Transverse colon (tissue), 4 donors: ENCODE measurements at regions of chr6 and their contacts with region 1.

Region 1: DNA sequence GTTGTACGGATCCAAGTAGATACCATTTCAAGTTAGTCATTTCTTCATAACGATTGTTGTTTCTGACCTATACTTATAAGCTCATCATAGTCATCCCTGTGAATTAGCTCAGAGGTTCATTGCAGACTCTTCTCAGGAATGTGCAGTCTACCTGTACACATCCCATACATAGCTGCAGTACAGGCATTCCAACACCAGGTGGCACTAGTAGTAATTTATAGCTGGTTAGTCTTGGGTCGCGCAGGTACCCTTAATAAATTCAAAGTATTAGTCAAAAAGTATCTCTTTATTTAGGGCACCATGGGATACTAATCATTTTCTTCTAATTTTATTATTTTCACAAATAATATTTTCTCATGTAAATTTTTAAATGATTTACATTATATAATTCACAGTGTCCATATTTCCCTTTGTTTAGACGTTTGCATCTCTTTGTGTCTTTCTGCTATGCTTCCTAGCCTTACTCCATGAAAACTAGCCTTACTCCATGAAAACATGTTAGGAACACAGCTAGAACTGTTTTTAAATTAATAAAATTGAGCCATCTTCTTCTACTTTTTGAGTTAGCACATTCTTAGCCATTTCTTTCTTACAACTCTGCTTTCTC is 128.6 kb upstream of the FAM83B start:
- DNase-seq: peak; percentile 86
- H3K4me3 ChIP-seq: no peak overlapping the region
- H3K27ac ChIP-seq: peak overlapping the region; percentile 19 to 66 (median 56)
- H3K4me1 ChIP-seq: peaks cover 0 to 19% (median 9%) of the 10 kb centered on the region in 4 donors
- H3K27me3 ChIP-seq: no peaks in the 10 kb centered on the region
- CTCF ChIP-seq: peak; percentile 74 to 88 (median 80)
- EP300 ChIP-seq: no peak
- POLR2A ChIP-seq: no peak

Region 2: DNA sequence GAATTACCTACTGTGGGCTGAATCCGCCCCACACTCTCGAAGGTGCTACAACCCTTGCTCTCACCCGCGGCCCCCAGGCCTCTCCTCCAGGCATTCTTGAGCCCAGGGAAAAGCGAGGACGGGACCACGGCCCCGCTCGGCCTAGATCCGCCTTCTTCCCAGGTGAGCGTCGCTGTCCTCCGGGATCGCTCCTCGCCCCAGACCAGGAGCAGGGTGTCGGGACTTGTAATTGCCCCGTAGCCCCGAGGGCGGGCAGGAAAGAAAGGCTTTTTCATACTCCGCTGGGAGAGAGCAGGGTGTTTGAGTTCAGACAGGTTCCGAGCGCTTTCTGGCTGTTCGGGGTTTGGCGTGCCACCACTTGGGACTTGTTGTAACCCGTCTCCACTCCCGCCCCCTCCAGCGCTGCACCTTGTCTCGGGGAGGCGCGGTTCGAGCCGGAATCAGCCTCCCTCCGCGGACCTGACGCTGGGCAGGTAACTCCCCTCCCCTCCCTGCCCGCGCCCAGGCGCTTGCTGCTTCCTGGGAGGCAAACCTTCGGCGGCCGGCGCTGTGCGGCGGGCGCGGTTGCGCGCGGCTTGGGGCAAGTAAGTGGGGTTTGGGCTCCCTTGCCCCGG is 128.4 kb after region 1 on chr6 and contains the start of gene FAM83B:
- in situ Hi-C with region 1: loop called in 1 of 4 experiments (anchors 10 kb)
- intact Hi-C with region 1: no loop called
- DNase-seq: peak; percentile 87
- H3K4me3 ChIP-seq: peak within 1 kb of the TSS; percentile 55 to 75 (median 64)
- H3K27ac ChIP-seq: peak within 1 kb of the TSS; percentile 73 to 94 (median 86)
- H3K4me1 ChIP-seq: peaks cover 0 to 17% (median 0%) of the 10 kb centered on the region in 4 donors
- H3K27me3 ChIP-seq: peaks cover 14% of the 10 kb centered on the region
- CTCF ChIP-seq: no peak
- EP300 ChIP-seq: no peak
- POLR2A ChIP-seq: peak; percentile 91
- total RNA-seq, gene FAM83B: 20.2 to 38.5 (median 36.6) TPM

Region 3: DNA sequence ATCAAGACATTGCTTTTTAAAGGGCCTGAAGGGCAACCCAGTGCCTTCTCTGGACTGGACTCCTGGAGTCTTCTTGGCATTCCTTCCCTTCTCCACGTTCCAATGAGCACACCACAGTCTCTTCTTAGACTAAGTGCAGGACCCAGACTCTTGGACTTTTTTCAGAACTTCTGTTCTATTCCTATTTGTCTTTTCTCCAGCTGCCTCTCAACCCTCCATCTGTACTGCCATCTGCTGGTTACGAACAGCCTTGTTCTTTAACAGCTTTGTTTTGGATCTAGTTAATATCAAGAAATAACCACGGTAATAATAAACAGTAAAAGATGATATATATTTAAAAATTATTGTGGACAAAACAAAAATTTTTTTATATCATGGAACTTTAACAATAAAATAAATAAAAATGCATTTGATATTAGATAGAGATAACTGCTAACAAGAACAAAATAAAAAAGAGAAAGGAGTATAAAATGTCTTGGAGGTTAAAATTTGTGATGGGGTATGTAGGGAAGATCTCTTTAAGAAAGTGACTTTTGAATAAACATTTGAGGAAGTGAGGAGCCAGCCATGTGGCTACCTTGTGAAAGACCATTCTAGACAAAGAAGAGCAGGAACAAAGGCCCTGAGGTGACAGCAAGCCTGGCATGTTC is 351.3 kb after region 1 on chr6:
- in situ Hi-C with region 1: loop called in 2 of 4 experiments (anchors 25 kb)
- intact Hi-C with region 1: no loop called
- DNase-seq: peak; percentile 36
- H3K4me3 ChIP-seq: no peak overlapping the region
- H3K27ac ChIP-seq: no peak overlapping the region
- H3K4me1 ChIP-seq: no peaks in the 10 kb centered on the region
- H3K27me3 ChIP-seq: no peaks in the 10 kb centered on the region
- CTCF ChIP-seq: peak; percentile 39 to 77 (median 62)
- EP300 ChIP-seq: no peak
- POLR2A ChIP-seq: no peak